Activated CD8-positive, alpha-beta T cell treated with anti-CD3 and anti-CD28 coated beads for 36 hours (primary cell): ENCODE measurements at regions of chr18 and their contacts with region 1.

Region 1: DNA sequence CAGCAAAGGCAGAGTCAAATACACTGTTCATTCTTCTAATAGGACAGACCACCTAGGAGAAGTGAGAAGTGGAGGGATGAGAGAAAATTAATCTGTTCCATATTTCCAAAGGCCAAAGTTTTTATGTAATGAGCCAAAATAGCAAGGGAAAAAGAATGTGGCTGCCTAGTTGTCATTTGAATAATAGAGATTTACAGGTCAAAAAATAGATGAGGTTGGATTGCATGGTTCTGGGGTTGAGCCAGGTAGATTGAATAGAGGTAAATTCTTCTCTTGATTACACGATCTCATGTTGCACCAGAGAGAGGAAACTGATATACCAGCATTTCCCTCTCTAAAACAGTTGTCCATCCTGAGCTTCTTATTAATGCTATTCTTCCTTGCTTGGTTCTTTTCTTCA is 325.8 kb downstream of the CCDC178 start:
- DNase-seq: no peak
- ATAC-seq: no peak
- H3K4me3 Mint-ChIP-seq: no peak overlapping the region
- H3K27ac Mint-ChIP-seq: no peak overlapping the region
- H3K4me1 Mint-ChIP-seq: no peaks in the 10 kb centered on the region
- H3K27me3 Mint-ChIP-seq: no peaks in the 10 kb centered on the region
- CTCF ChIP-seq: no peak

Region 2: GRCh38 chr18:33010149-33010548 is 104.6 kb before region 1 on chr18:
- CTCF ChIA-PET with region 1: no interaction called
- POLR2A ChIA-PET with region 1: no interaction called
- intact Hi-C with region 1: loop called (anchors 5 kb)
- DNase-seq: no peak
- ATAC-seq: no peak
- H3K4me3 Mint-ChIP-seq: no peak overlapping the region
- H3K27ac Mint-ChIP-seq: no peak overlapping the region
- H3K4me1 Mint-ChIP-seq: no peaks in the 10 kb centered on the region
- H3K27me3 Mint-ChIP-seq: no peaks in the 10 kb centered on the region
- CTCF ChIP-seq: no peak

Region 3: GRCh38 chr18:33146014-33146413 is 31.3 kb after region 1 on chr18:
- CTCF ChIA-PET with region 1: no interaction called
- POLR2A ChIA-PET with region 1: no interaction called
- intact Hi-C with region 1: no loop called
- DNase-seq: no peak
- ATAC-seq: no peak
- H3K4me3 Mint-ChIP-seq: no peak overlapping the region
- H3K27ac Mint-ChIP-seq: no peak overlapping the region
- H3K4me1 Mint-ChIP-seq: no peaks in the 10 kb centered on the region
- H3K27me3 Mint-ChIP-seq: no peaks in the 10 kb centered on the region
- CTCF ChIP-seq: no peak